Breast epithelium (tissue), 4 donors: ENCODE measurements at regions of chr4 and their contacts with region 1.

Region 1: GRCh38 chr4:56186808-56187523 is 200.3 kb downstream of the AASDH start:
- DNase-seq: no peak
- H3K4me3 ChIP-seq: no peak overlapping the region
- H3K27ac ChIP-seq: no peak overlapping the region
- H3K4me1 ChIP-seq: no peaks in the 10 kb centered on the region
- H3K27me3 ChIP-seq: no peaks in the 10 kb centered on the region
- CTCF ChIP-seq: no peak
- POLR2A ChIP-seq: no peak

Region 2: GRCh38 chr4:55838356-55838755 is 348.6 kb before region 1 on chr4:
- intact Hi-C with region 1: no loop called
- DNase-seq: no peak
- H3K4me3 ChIP-seq: no peak overlapping the region
- H3K27ac ChIP-seq: no peak overlapping the region
- H3K4me1 ChIP-seq: no peaks in the 10 kb centered on the region
- H3K27me3 ChIP-seq: no peaks in the 10 kb centered on the region
- CTCF ChIP-seq: no peak
- POLR2A ChIP-seq: no peak

Region 3: DNA sequence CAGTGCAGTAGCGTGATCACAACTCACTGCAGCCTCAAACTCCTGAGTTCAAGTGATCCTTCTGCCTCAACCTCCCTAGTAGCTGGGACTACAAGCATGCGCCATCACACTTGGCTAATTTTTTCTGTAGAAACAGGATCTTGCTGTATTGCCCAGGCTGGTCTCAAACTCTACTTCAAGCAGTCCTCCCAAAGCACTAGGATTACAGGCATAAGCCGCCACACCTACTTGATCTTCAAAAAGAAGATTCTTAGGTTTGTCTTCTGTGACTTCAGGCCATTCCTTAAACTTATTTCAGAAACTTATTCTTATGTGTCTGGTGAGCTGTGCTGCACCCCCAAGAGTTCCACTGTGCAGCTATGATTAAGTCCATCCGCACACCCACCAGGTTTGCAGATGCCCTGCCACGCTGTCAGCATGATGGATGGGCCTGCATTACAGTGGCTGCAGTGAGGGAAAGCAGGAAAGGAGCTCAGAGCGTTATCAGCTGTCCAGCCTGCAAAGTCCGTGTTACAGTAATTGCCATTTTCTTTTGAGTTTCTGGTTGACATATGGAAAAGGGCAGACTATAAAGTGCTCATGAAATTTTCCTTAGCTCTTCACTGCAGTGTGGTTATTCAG is 53.7 kb after region 1 on chr4:
- intact Hi-C with region 1: loop called (anchors 2 kb)
- DNase-seq: no peak
- H3K4me3 ChIP-seq: no peak overlapping the region
- H3K27ac ChIP-seq: no peak overlapping the region
- H3K4me1 ChIP-seq: no peaks in the 10 kb centered on the region
- H3K27me3 ChIP-seq: no peaks in the 10 kb centered on the region
- CTCF ChIP-seq: no peak
- POLR2A ChIP-seq: no peak